ENCODE measurements at regions of chr9 and their contacts with region 1.

Region 1: GRCh38 chr9:132919614-132920268 is 24.7 kb downstream of the TSC1 start:
- DNase-seq: no peak
- ATAC-seq: no peak
- H3K4me3 ChIP-seq: no peak overlapping the region
- H3K27ac ChIP-seq: no peak overlapping the region
- H3K4me1 ChIP-seq: no peaks in the 10 kb centered on the region
- H3K27me3 ChIP-seq: no peaks in the 10 kb centered on the region
- CTCF ChIP-seq: no peak

Region 2: GRCh38 chr9:132609829-132610228 is 309.9 kb before region 1 on chr9:
- intact Hi-C with region 1: loop called in 1 of 2 experiments (anchors 10 kb)
- DNase-seq: no peak
- ATAC-seq: peak in 2 of 4 donors; percentile 21 to 33
- H3K4me3 ChIP-seq: no peak overlapping the region
- H3K27ac ChIP-seq: no peak overlapping the region
- H3K4me1 ChIP-seq: no peaks in the 10 kb centered on the region
- H3K27me3 ChIP-seq: no peaks in the 10 kb centered on the region
- CTCF ChIP-seq: no peak

Measured in psoas muscle (tissue), 8 donors.